ENCODE measurements at regions of chr11 and their contacts with region 1.

Region 1: DNA sequence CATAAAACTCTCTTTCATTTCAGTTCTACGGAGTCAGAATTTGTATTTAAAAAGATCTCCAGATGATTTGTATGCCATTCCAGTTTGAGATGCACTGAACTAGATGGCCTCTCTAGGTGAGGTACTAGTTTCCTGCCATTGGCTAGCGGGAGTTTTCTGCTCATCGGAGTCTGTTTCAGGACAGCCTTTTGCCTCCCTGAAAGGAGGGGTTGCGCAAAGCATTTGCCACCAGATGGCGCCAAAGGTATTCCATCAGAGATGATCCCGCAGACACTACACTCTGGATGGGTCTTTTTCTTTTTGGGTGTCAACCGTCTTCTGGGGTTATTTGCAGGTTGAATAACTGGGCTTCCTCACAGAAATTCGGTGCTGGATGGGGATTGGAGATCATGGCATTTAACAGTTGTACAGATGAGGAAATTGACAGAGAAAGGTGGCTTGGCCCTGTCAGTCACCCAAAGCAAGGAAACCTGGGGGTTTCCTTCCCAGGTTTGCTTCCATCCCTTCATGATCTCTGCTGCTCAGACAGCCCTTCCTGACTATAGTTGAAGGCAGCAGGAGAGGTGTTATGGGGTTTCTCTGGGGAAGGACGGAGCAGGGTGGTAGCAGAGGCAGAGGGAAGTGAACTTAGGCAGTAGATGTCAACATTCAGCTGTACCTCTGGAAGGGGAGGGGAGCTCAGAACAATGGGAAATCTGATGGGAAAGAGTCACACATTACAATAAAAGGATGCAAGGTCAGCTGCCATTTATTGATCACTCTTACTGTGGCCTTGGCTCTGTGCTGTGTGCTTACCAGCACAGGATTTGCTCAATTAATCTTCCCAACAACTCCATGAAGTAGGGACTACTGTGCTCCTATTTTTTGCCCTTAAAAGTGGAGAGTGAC is 81.6 kb downstream of the CCDC81 start:
- DNase-seq: peak; percentile 86
- H3K4me3 Mint-ChIP-seq: no peak overlapping the region
- H3K27ac Mint-ChIP-seq: no peak overlapping the region
- H3K4me1 Mint-ChIP-seq: peaks cover 26% of the 10 kb centered on the region
- H3K27me3 Mint-ChIP-seq: no peaks in the 10 kb centered on the region
- CTCF ChIP-seq: peak; percentile 78

Region 2: GRCh38 chr11:86360775-86361395 is 95.4 kb before region 1 on chr11:
- CTCF ChIA-PET with region 1: interaction called, 57 read pairs
- POLR2A ChIA-PET with region 1: interaction called, 3 read pairs
- intact Hi-C with region 1: loop called (anchors 5 kb)
- DNase-seq: peak; percentile 44
- H3K4me3 Mint-ChIP-seq: no peak overlapping the region
- H3K27ac Mint-ChIP-seq: no peak overlapping the region
- H3K4me1 Mint-ChIP-seq: no peaks in the 10 kb centered on the region
- H3K27me3 Mint-ChIP-seq: no peaks in the 10 kb centered on the region
- CTCF ChIP-seq: peak; percentile 28

Region 3: GRCh38 chr11:86497181-86497701 is 40.9 kb after region 1 on chr11:
- CTCF ChIA-PET with region 1: no interaction called
- POLR2A ChIA-PET with region 1: no interaction called
- intact Hi-C with region 1: no loop called
- DNase-seq: no peak
- H3K4me3 Mint-ChIP-seq: no peak overlapping the region
- H3K27ac Mint-ChIP-seq: no peak overlapping the region
- H3K4me1 Mint-ChIP-seq: peaks cover 7% of the 10 kb centered on the region
- H3K27me3 Mint-ChIP-seq: no peaks in the 10 kb centered on the region
- CTCF ChIP-seq: no peak

Region 4: GRCh38 chr11:86571273-86571948 is 115.1 kb after region 1 on chr11:
- CTCF ChIA-PET with region 1: interaction called, 5 read pairs
- POLR2A ChIA-PET with region 1: no interaction called
- intact Hi-C with region 1: loop called (anchors 2 kb)
- DNase-seq: peak; percentile 52
- H3K4me3 Mint-ChIP-seq: no peak overlapping the region
- H3K27ac Mint-ChIP-seq: no peak overlapping the region
- H3K4me1 Mint-ChIP-seq: peaks cover 29% of the 10 kb centered on the region
- H3K27me3 Mint-ChIP-seq: no peaks in the 10 kb centered on the region
- CTCF ChIP-seq: peak; percentile 36

Region 5: DNA sequence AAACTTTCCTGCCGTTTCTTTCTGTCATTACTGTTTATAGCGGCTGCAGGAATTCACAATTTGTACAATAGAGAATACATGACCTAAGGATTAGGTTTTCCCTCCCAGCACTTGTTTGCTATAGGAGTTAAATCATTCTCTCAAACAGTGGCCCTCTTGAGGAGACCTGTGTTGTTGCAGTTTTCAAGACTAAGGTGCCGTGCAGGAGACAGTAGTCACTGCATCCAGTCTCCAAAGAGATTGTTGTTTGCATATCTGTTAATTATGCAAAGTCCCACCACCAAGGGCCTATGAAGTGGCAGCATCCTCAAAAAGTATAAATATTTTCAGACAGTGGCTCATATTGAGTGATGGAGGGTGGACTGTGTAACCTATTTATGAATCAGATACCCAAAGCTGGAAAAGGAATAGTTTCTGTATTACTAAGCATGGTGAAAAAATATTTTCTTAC is 346.3 kb after region 1 on chr11:
- CTCF ChIA-PET with region 1: interaction called, 22 read pairs
- POLR2A ChIA-PET with region 1: no interaction called
- intact Hi-C with region 1: loop called (anchors 5 kb)
- DNase-seq: peak; percentile 61
- H3K4me3 Mint-ChIP-seq: no peak overlapping the region
- H3K27ac Mint-ChIP-seq: no peak overlapping the region
- H3K4me1 Mint-ChIP-seq: peaks cover 11% of the 10 kb centered on the region
- H3K27me3 Mint-ChIP-seq: no peaks in the 10 kb centered on the region
- CTCF ChIP-seq: peak; percentile 69

Region 6: DNA sequence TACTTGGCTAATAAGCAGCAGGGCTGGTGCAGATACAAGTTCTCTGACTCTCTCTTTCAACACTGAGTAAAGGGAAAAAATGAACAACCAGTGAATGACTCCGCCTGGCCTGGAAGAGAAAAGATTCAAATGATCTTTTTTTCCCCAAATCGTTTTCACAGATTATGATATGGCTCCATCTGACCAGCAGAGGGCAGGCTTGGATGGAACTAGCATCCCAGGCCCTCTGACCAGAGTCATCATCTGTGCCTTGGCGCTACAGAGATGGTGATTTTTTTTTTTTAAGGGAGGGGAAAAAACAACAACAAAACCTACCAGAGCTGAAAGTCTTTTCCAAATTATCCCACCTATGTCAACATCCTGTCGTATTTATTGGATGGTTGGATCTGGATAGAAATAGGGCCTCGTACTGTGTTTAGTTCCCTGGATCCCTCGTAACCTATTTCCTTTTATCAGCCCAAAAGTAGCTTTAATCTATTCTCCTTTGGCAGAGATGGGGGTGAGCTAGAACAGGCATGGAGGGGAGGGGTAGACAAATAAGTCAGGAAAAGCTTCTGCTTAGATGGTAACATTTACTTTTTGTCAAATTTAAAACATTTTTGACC is 413.8 kb after region 1 on chr11:
- CTCF ChIA-PET with region 1: interaction called, 20 read pairs
- POLR2A ChIA-PET with region 1: no interaction called
- intact Hi-C with region 1: no loop called
- DNase-seq: peak; percentile 71
- H3K4me3 Mint-ChIP-seq: no peak overlapping the region
- H3K27ac Mint-ChIP-seq: no peak overlapping the region
- H3K4me1 Mint-ChIP-seq: peaks cover 5% of the 10 kb centered on the region
- H3K27me3 Mint-ChIP-seq: no peaks in the 10 kb centered on the region
- CTCF ChIP-seq: peak; percentile 81